ENCODE measurements at regions of chr18 and their contacts with region 1.

Region 1: DNA sequence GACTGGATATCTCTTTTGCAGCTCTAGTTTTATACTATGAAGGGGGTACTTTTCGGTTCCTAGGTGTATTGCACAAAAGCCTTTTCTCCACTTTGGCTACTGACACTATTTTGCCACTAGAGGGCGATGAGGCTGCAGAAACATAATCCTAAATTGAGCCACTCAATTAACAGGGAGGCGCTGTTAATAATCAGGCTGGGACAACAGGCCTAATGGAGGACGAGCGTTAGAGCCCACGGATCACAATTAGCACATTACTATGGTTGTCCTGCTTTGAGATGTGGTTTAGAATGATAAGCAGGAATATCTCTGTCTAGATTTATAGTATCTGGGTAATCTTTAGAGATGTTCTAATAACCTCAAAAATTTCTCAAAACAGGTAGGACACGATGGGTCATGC is 62.2 kb upstream of the PMAIP1 start:
- DNase-seq: peak; percentile 67
- ATAC-seq: peak; percentile 83
- H3K4me3 ChIP-seq: no peak overlapping the region
- H3K27ac ChIP-seq: no peak overlapping the region
- H3K4me1 ChIP-seq: peaks cover 2% of the 10 kb centered on the region; the same call in 1 of the 2 replicates
- H3K27me3 ChIP-seq: peaks cover 4% of the 10 kb centered on the region; the same call in 1 of the 2 replicates
- CTCF ChIP-seq: peak; percentile 89
- POLR2A ChIP-seq: no peak
- RAD21 ChIP-seq: peak; percentile 88

Region 2: GRCh38 chr18:59957971-59958595 is 120.5 kb after region 1 on chr18:
- CTCF ChIA-PET with region 1: no interaction called
- POLR2A ChIA-PET with region 1: no interaction called
- dilution Hi-C with region 1: no loop called
- in situ Hi-C with region 1: no loop called
- intact Hi-C with region 1: loop called (anchors 10 kb)
- DNase-seq: peak; percentile 83
- ATAC-seq: peak; percentile 54; the same call in 1 of the 2 replicates
- H3K4me3 ChIP-seq: no peak overlapping the region
- H3K27ac ChIP-seq: no peak overlapping the region
- H3K4me1 ChIP-seq: peaks cover 6% of the 10 kb centered on the region
- H3K27me3 ChIP-seq: no peaks in the 10 kb centered on the region
- CTCF ChIP-seq: no peak
- POLR2A ChIP-seq: no peak
- RAD21 ChIP-seq: no peak

Region 3: DNA sequence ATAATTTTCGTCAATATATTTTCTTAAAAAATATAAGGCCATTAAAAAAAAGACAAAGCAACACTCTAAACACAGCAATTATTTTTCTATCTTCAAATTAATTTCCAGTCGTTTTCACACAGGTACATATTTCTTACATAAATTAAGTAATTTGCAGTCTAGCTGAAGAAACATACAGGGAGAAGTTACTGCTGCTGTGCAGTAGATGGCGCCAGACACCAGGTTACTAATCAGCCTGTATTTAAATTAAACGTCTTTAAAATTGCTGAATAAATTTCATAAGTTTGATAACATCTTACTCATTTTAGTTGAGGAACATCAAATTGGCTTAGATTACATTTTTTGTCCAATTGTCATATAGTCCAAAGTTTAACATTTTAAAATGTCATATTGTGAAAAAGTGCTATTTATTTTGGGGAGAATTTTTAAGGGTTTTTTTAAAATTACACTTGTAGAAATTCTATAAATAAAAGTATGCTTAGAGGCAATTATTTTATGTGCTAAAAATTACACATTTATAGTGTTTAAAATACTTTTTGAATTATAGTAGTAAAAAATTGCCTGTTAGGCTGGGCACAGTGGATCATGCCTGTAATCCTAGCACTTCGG is 150.6 kb after region 1 on chr18:
- CTCF ChIA-PET with region 1: interaction called, 5 read pairs
- POLR2A ChIA-PET with region 1: no interaction called
- dilution Hi-C with region 1: no loop called
- in situ Hi-C with region 1: no loop called
- intact Hi-C with region 1: loop called (anchors 1 kb)
- DNase-seq: peak; percentile 74
- ATAC-seq: peak; percentile 77
- H3K4me3 ChIP-seq: no peak overlapping the region
- H3K27ac ChIP-seq: no peak overlapping the region
- H3K4me1 ChIP-seq: no peaks in the 10 kb centered on the region
- H3K27me3 ChIP-seq: peaks cover 19% of the 10 kb centered on the region
- CTCF ChIP-seq: peak; percentile 98
- POLR2A ChIP-seq: no peak
- RAD21 ChIP-seq: peak; percentile 96

Region 4: GRCh38 chr18:60413944-60414547 is 576.5 kb after region 1 on chr18:
- CTCF ChIA-PET with region 1: no interaction called
- POLR2A ChIA-PET with region 1: no interaction called
- dilution Hi-C with region 1: no loop called
- in situ Hi-C with region 1: loop called (anchors 25 kb)
- intact Hi-C with region 1: no loop called
- DNase-seq: peak; percentile 7
- ATAC-seq: 0 out of 2 replicates have a peak, but pooled peaks have one; percentile 54
- H3K4me3 ChIP-seq: no peak overlapping the region
- H3K27ac ChIP-seq: no peak overlapping the region
- H3K4me1 ChIP-seq: no peaks in the 10 kb centered on the region
- H3K27me3 ChIP-seq: no peaks in the 10 kb centered on the region
- CTCF ChIP-seq: peak; percentile 45
- POLR2A ChIP-seq: no peak
- RAD21 ChIP-seq: peak; percentile 43; the same call in 1 of the 2 replicates

Region 5: DNA sequence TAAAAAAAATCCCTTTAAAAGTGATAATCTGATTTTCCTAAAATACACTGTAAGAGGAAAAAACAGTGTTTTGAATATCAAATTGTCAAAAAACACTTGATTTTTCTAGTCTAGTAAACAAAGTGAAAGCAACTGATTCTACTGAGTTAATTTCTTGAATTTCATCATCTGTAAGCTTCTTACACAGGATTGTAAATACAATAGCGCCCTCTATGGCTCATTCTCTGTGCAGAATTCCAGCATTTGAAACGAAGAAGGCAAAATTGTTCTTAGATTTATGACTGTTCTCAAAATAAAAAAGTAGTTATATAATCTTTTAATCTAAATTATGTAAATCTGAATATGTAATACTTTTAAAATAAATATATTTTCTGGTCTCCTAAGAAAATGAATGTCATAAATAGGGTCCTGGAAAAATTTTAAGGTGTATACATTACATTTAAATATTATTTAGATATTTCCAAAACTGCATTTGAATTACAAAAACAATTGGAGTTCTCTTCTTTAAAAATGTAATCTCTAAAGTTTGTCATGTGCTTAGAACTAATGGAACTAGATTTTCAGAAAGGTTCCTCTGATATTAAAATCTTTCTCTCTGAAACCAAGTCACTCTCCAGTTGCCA is 711.9 kb after region 1 on chr18:
- CTCF ChIA-PET with region 1: no interaction called
- POLR2A ChIA-PET with region 1: no interaction called
- dilution Hi-C with region 1: no loop called
- in situ Hi-C with region 1: loop called (anchors 10 kb)
- intact Hi-C with region 1: loop called (anchors 1 kb)
- DNase-seq: peak; percentile 78
- ATAC-seq: peak; percentile 66
- H3K4me3 ChIP-seq: no peak overlapping the region
- H3K27ac ChIP-seq: no peak overlapping the region
- H3K4me1 ChIP-seq: no peaks in the 10 kb centered on the region
- H3K27me3 ChIP-seq: no peaks in the 10 kb centered on the region
- CTCF ChIP-seq: peak; percentile 90
- POLR2A ChIP-seq: no peak
- RAD21 ChIP-seq: peak; percentile 88